Activated CD4-positive, alpha-beta T cell treated with anti-CD3 and anti-CD28 coated beads, Interleukin-2, amount 10 ng/mL, durations not matched to agents 7 days and 5 days (primary cell): ENCODE measurements at regions of chr3 and their contacts with region 1.

Region 1: DNA sequence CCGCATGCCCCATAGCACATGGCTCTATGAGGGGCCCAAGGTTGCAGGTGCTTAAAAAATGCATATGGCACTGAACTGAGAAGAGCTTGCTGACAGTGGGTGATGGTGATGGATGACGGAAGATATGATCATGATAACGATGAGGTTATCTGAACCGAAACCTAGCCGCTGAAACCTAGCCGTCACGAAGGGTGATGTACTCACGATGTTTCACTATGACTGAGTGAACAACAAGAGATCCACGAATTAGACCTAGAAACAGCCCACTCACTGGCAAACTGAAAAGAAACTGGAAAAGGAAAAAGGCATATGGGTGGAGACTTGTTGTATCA is 57.6 kb upstream of the BCL6 start:
- DNase-seq: peak; percentile 84
- H3K4me3 Mint-ChIP-seq: peak overlapping the region; percentile 14
- H3K27ac Mint-ChIP-seq: peak overlapping the region; percentile 91
- H3K4me1 Mint-ChIP-seq: peaks cover 89% of the 10 kb centered on the region
- H3K27me3 Mint-ChIP-seq: no peaks in the 10 kb centered on the region

Region 2: GRCh38 chr3:187745201-187746058 is 57.5 kb before region 1 on chr3 and contains the start of gene BCL6:
- CTCF ChIA-PET with region 1: interaction called, 40 read pairs
- POLR2A ChIA-PET with region 1: interaction called, 8 read pairs
- DNase-seq: peak; percentile 92
- H3K4me3 Mint-ChIP-seq: peak within 1 kb of the TSS; percentile 97
- H3K27ac Mint-ChIP-seq: peak within 1 kb of the TSS; percentile 100
- H3K4me1 Mint-ChIP-seq: peaks cover 70% of the 10 kb centered on the region
- H3K27me3 Mint-ChIP-seq: peaks cover 4% of the 10 kb centered on the region
- total RNA-seq, gene BCL6: 12.0 to 12.7 TPM

Region 3: DNA sequence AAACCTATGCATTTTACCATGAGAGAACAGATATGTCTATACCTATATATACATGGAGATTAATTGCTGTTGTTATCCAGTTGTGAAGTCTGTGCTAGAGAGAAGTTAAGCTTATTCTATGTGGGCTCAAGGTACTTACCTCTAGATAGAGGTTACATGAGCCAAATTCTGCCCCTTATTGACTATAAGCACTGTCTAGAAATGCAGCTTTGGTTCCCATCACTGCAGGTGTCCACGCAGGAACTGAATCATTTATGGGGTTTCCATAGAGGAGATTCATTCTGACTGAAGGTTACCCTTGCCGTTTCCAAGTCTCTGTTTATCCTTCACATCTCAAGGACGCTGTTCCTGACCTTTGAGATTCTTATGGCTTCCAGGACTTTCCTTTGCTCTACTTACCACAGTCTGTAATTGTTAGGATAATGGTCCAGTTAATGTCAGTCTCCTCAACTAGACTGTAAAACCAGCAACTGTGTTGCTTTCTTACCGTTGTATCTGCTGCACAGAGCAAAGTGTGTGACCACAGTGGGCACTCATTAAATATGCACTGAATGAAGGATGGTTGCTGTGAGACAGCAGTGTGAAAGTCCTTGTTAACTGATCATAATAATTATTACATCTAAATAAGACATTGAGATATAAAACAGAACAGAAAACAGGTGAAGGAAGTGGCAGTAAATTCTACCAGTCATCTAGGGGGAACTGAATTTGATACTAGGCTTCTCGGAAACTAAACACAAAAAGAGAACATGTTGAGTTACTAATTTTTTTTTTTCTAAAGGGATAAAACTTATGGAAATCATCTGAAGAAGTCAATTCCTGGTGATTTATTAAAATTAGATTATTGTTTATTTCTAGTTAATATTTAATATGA is 13.7 kb before region 1 on chr3:
- CTCF ChIA-PET with region 1: interaction called, 11 read pairs
- POLR2A ChIA-PET with region 1: no interaction called
- DNase-seq: no peak
- H3K4me3 Mint-ChIP-seq: no peak overlapping the region
- H3K27ac Mint-ChIP-seq: peak overlapping the region; percentile 10
- H3K4me1 Mint-ChIP-seq: peaks cover 19% of the 10 kb centered on the region
- H3K27me3 Mint-ChIP-seq: no peaks in the 10 kb centered on the region

Region 4: DNA sequence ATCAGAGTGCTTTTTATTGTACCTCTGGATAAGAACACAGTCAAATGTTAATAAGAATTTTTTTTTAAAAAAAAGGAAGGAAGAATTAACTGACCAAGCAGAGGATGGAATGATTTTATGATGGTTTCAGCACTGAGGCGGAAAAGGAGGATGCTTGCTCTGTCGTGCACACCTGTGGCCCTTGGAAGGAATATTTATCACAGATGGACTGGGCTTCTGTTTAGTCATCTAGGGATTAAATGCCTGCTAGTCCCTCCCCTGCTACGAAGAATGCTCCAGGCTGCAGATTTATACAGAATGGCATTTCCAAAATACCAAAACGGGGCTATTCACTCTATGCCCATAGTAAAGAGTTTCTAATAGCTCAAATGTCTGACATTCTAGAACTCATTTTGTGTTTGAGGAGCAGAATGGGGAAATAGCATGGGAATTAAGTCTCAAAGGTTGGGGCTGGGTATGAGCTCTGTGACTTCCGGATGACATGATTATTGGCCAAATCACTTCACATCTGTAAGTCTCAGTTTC is 35.2 kb after region 1 on chr3:
- CTCF ChIA-PET with region 1: no interaction called
- POLR2A ChIA-PET with region 1: no interaction called
- DNase-seq: no peak
- H3K4me3 Mint-ChIP-seq: no peak overlapping the region
- H3K27ac Mint-ChIP-seq: no peak overlapping the region
- H3K4me1 Mint-ChIP-seq: peaks cover 2% of the 10 kb centered on the region
- H3K27me3 Mint-ChIP-seq: no peaks in the 10 kb centered on the region

Region 5: DNA sequence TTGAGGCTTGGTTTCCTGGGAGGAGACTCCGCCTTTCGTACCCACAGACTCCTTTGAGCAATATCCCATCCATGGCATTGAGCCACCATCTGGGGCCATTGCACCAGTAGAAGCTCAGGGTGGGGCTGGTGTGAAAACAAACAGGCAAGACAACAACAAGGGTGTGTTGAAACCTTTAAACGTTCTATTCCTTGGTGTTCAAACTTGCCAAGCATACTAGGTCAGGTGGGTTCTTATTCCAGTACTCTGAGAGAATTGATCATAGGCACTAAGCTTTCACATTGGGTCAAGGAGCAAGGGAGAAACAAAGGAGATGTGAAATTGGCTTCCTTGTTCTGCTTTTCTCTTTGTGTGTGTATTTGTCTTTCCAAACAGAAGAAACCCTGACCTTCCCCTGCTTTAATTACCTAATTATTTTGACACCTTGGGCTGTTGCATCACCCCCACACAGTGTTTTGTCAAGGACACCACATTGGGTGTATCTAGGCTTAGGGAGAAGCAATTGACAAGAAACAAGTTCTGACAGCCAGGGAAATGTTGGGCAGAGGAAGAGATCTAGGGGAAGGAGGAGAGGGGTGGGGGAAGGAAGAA is 47.5 kb after region 1 on chr3:
- CTCF ChIA-PET with region 1: interaction called, 3 read pairs
- POLR2A ChIA-PET with region 1: interaction called, 10 read pairs
- DNase-seq: no peak
- H3K4me3 Mint-ChIP-seq: no peak overlapping the region
- H3K27ac Mint-ChIP-seq: no peak overlapping the region
- H3K4me1 Mint-ChIP-seq: peaks cover 8% of the 10 kb centered on the region
- H3K27me3 Mint-ChIP-seq: no peaks in the 10 kb centered on the region

Region 6: GRCh38 chr3:187986514-187986934 is 183.6 kb after region 1 on chr3:
- CTCF ChIA-PET with region 1: no interaction called
- POLR2A ChIA-PET with region 1: no interaction called
- DNase-seq: peak; percentile 16
- H3K4me3 Mint-ChIP-seq: no peak overlapping the region
- H3K27ac Mint-ChIP-seq: peak overlapping the region; percentile 70
- H3K4me1 Mint-ChIP-seq: peaks cover 46% of the 10 kb centered on the region
- H3K27me3 Mint-ChIP-seq: no peaks in the 10 kb centered on the region